Activated CD4-positive, alpha-beta T cell treated with anti-CD3 and anti-CD28 coated beads, Interleukin-2, amount 10 ng/mL, durations not matched to agents 7 days and 5 days (primary cell): ENCODE measurements at regions of chr18 and their contacts with region 1.

Region 1: GRCh38 chr18:9575558-9575957 is 38.8 kb downstream of the PPP4R1 start:
- DNase-seq: peak; percentile 46
- H3K4me3 Mint-ChIP-seq: no peak overlapping the region
- H3K27ac Mint-ChIP-seq: no peak overlapping the region
- H3K4me1 Mint-ChIP-seq: peaks cover 1% of the 10 kb centered on the region
- H3K27me3 Mint-ChIP-seq: no peaks in the 10 kb centered on the region

Region 2: GRCh38 chr18:9561759-9562158 is 13.8 kb before region 1 on chr18:
- CTCF ChIA-PET with region 1: interaction called, 10 read pairs
- POLR2A ChIA-PET with region 1: no interaction called
- DNase-seq: no peak
- H3K4me3 Mint-ChIP-seq: no peak overlapping the region
- H3K27ac Mint-ChIP-seq: no peak overlapping the region
- H3K4me1 Mint-ChIP-seq: no peaks in the 10 kb centered on the region
- H3K27me3 Mint-ChIP-seq: no peaks in the 10 kb centered on the region

Region 3: DNA sequence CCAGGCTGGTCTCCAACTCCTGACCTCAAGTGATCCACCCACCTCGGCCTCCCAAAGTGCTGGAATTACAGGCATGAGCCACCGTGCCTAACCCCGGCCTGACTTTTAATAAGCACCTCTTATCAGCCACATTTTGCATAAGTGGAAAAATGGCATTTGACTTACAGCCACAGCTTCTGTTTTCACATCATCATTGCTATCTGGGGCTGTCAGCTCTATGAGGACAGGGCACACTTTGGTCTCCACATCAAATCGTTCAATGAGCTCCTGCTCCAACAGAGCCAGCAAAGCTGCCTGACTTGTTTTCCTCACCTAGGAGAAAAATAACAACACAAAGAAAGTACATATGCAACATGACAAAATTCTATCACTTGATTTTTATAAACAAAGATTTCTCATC is 12.4 kb after region 1 on chr18:
- CTCF ChIA-PET with region 1: no interaction called
- POLR2A ChIA-PET with region 1: no interaction called
- DNase-seq: no peak
- H3K4me3 Mint-ChIP-seq: no peak overlapping the region
- H3K27ac Mint-ChIP-seq: no peak overlapping the region
- H3K4me1 Mint-ChIP-seq: no peaks in the 10 kb centered on the region
- H3K27me3 Mint-ChIP-seq: no peaks in the 10 kb centered on the region

Region 4: GRCh38 chr18:9766076-9766481 is 190.5 kb after region 1 on chr18:
- CTCF ChIA-PET with region 1: no interaction called
- POLR2A ChIA-PET with region 1: no interaction called
- DNase-seq: no peak
- H3K4me3 Mint-ChIP-seq: no peak overlapping the region
- H3K27ac Mint-ChIP-seq: no peak overlapping the region
- H3K4me1 Mint-ChIP-seq: no peaks in the 10 kb centered on the region
- H3K27me3 Mint-ChIP-seq: peaks cover 4% of the 10 kb centered on the region